ENCODE measurements at regions of chr14 and their contacts with region 1.

Region 1: DNA sequence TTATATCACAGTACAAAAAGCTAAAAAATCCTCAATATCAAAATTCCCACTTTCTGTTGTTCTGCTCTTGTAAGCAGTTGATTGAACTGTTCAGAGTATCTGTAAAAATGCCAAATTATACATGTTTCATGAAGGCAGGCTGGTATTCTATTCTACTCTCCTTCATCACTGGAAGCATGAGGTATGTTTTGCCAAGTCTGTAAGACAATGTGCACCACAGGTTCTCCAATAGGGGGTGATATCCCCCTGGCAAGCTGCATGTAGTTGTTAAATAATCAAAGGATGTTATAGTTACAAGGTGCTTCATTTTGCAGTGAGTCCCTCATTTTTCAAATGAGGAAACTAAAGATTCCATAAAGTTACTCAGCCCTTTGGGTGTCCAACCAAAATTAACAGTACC is 15.1 kb upstream of the NEK9 start:
- DNase-seq: peak; percentile 47
- ATAC-seq: peak; percentile 52
- H3K4me3 Mint-ChIP-seq: no peak overlapping the region
- H3K27ac Mint-ChIP-seq: peak overlapping the region; percentile 20
- H3K4me1 Mint-ChIP-seq: peaks cover 62% of the 10 kb centered on the region
- H3K27me3 Mint-ChIP-seq: no peaks in the 10 kb centered on the region

Region 2: DNA sequence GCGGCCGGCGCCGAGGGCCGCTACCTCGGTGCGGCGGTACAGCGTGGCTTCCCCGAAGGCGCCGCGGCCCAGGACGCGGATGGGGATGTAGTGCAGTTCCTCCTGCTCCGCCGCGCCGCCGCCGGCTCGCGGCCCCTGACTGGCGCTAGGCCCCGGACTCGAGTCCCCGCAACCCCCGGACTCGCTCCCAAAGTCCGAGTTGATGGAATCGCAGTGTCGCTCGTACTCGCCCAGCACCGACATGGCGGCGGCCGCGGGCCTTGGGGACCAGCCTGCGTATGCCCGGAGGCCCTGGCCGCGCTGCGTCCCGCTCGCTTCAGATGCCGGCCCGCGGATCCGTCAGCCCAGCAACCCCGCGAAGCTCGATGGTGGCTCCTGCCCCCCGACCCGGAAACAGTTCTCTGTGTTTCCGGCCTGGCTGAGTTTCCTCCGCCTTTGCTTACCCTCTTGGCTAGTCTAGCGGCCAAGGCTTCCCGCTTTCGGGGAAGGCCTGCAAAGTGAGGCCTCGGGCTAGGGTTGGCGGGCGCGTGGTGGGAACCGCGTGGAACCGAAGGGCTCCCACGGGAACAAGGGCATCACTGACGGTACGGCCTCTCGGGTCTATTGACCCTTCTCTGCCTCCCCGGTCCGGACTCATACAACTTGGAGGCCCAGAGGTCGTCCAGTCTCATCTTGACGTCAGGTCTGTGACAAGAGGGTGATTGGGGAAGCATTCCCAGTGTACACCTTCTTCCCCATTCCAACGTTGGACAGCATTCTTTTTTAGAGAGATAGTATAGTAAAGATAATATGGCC is 15.1 kb before region 1 on chr14 and contains the start of gene NEK9:
- CTCF ChIA-PET with region 1: interaction called, 11 read pairs
- DNase-seq: peak; percentile 94
- ATAC-seq: peak; percentile 96
- H3K4me3 Mint-ChIP-seq: peak within 1 kb of the TSS; percentile 98
- H3K27ac Mint-ChIP-seq: peak within 1 kb of the TSS; percentile 98
- H3K4me1 Mint-ChIP-seq: peaks cover 41% of the 10 kb centered on the region
- H3K27me3 Mint-ChIP-seq: no peaks in the 10 kb centered on the region
- total RNA-seq, gene NEK9: 83.0 to 86.4 TPM